ENCODE measurements at regions of chr11 and their contacts with region 1.

Region 1: DNA sequence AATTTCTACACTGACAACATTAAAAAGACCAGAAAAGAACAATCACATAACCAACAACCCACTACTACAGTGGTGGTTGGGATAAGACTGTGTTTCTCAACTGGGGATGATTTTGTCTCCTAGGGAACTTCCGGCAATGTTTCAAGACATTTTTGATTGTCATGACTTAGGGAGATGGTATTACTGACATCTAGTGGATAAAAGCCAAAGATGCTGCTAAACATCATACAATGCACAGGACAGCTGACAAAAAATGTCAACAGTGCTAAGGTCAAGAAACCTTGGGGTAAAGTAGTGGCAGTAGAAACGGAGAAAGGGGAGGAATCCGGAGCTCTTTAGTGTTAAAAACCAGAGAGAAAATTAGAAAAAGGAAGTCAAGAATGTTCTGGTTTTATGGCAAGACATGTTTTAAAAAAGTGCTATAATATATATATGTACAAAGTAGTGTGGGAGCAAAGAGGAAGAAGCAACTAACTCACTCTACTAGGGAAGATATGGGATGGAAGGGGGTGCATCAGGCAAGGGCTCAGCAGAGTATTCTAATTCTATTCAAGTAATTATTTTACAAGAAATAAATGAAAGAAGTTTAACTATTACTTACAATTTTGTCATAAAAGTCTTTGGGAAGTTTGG is 37.2 kb downstream of the CKAP5 start:
- DNase-seq: no peak
- ATAC-seq: peak; percentile 34; the same call in 1 of the 3 replicates
- H3K4me3 ChIP-seq: no peak overlapping the region
- H3K27ac ChIP-seq: no peak overlapping the region
- H3K4me1 ChIP-seq: no peaks in the 10 kb centered on the region
- H3K27me3 ChIP-seq: no peaks in the 10 kb centered on the region
- CTCF ChIP-seq: peak; percentile 26 to 46 (median 35); a peak in 4 of 6 replicates
- EP300 ChIP-seq: no peak
- POLR2A ChIP-seq: no peak
- RAD21 ChIP-seq: no peak

Region 2: DNA sequence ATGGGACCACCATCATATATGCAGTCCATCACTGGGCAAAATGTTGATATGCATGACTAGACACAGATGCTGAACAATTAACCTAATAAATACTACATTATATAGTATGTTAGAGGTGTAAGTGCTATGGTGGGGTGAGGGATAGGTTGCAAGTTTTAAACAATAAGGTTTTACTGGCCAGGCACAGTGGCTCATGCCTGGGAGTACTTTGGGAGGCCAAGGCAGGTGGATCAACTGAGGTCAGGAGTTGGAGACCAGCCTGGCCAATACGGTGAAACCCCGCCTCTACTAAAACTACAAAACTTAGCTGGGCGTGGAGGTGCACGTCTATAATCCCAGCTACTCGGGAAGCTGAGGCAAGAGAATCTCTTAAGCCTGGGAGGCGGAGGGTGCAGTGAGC is 61.8 kb before region 1 on chr11:
- CTCF ChIA-PET with region 1: no interaction called
- POLR2A ChIA-PET with region 1: no interaction called
- RAD21 ChIA-PET with region 1: no interaction called
- SMC1A ChIA-PET with region 1: no interaction called
- in situ Hi-C with region 1: no loop called
- intact Hi-C with region 1: no loop called
- DNase-seq: no peak
- ATAC-seq: no peak
- H3K4me3 ChIP-seq: no peak overlapping the region
- H3K27ac ChIP-seq: no peak overlapping the region
- H3K4me1 ChIP-seq: no peaks in the 10 kb centered on the region
- H3K27me3 ChIP-seq: no peaks in the 10 kb centered on the region
- CTCF ChIP-seq: no peak
- EP300 ChIP-seq: no peak
- POLR2A ChIP-seq: no peak
- RAD21 ChIP-seq: no peak

Region 3: GRCh38 chr11:46769636-46770221 is 39.2 kb before region 1 on chr11:
- CTCF ChIA-PET with region 1: no interaction called
- POLR2A ChIA-PET with region 1: no interaction called
- RAD21 ChIA-PET with region 1: no interaction called
- SMC1A ChIA-PET with region 1: no interaction called
- in situ Hi-C with region 1: no loop called
- intact Hi-C with region 1: loop called (anchors 5 kb)
- DNase-seq: no peak
- ATAC-seq: no peak
- H3K4me3 ChIP-seq: no peak overlapping the region
- H3K27ac ChIP-seq: no peak overlapping the region
- H3K4me1 ChIP-seq: no peaks in the 10 kb centered on the region
- H3K27me3 ChIP-seq: no peaks in the 10 kb centered on the region
- CTCF ChIP-seq: no peak
- EP300 ChIP-seq: no peak
- POLR2A ChIP-seq: no peak
- RAD21 ChIP-seq: no peak

Measured in GM12878 (cell line).